ENCODE measurements at regions of chr11 and their contacts with region 1.

Region 1: DNA sequence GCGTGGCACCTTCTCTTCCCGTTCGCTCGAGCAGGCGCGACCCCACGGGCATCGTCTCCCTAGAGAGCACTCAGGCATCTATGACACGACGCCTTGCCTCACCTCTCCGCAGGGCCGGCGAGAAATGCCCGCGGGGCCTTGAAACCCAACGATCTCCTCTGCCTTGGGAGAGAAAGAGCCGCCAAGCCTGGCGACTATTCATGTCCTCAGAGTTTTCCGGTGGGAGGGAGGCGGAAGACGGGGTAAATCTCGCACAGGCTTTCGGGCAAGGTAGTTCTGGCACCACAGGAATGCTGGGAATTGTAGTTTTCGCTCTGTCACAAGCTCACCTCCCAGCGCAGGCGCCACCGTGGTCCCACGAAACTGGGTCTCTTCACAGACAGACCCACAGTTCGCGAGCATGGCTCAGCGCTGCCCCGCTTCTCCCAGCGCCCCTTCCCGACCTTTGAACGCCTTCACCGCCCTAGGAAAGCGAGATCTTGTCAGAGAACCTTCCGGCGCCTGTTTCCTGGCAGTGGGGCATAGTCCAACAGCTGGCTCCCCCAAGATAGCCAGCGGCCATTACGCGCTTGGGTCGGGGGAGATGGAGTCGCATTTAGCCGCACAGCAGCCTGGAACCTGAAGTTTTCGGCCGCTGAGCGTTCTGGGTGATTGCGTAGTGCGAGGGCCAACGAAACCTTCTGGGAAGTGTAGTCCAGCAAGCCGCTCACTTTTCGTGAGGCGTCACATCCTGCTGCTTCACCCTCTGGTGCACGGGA is at the start of gene CCDC90B:
- DNase-seq: peak; percentile 98
- ATAC-seq: peak; percentile 94
- H3K4me3 ChIP-seq: peak within 1 kb of the TSS; percentile 65
- H3K27ac ChIP-seq: peak within 1 kb of the TSS; percentile 92
- H3K4me1 ChIP-seq: peaks cover 2% of the 10 kb centered on the region
- H3K27me3 ChIP-seq: no peaks in the 10 kb centered on the region
- CTCF ChIP-seq: peak; percentile 54
- POLR2A ChIP-seq: peak; percentile 94
- RAD21 ChIP-seq: no peak
- total RNA-seq, gene CCDC90B: 43.7 and 63.0 TPM in 2 replicates

Region 2: GRCh38 chr11:82733444-82734119 is 552.4 kb before region 1 on chr11 and contains the start of gene FAM181B:
- CTCF ChIA-PET with region 1: no interaction called
- POLR2A ChIA-PET with region 1: no interaction called
- dilution Hi-C with region 1: no loop called
- in situ Hi-C with region 1: no loop called
- intact Hi-C with region 1: no loop called
- DNase-seq: no peak
- ATAC-seq: peak; percentile 70
- H3K4me3 ChIP-seq: peak within 1 kb of the TSS; percentile 39
- H3K27ac ChIP-seq: no peak within 1 kb of the TSS
- H3K4me1 ChIP-seq: peaks cover 2% of the 10 kb centered on the region; the same call in 1 of the 2 replicates
- H3K27me3 ChIP-seq: peaks cover 54% of the 10 kb centered on the region
- CTCF ChIP-seq: no peak
- POLR2A ChIP-seq: no peak
- RAD21 ChIP-seq: no peak
- total RNA-seq, gene FAM181B: not detected in 2 replicates

Region 3: DNA sequence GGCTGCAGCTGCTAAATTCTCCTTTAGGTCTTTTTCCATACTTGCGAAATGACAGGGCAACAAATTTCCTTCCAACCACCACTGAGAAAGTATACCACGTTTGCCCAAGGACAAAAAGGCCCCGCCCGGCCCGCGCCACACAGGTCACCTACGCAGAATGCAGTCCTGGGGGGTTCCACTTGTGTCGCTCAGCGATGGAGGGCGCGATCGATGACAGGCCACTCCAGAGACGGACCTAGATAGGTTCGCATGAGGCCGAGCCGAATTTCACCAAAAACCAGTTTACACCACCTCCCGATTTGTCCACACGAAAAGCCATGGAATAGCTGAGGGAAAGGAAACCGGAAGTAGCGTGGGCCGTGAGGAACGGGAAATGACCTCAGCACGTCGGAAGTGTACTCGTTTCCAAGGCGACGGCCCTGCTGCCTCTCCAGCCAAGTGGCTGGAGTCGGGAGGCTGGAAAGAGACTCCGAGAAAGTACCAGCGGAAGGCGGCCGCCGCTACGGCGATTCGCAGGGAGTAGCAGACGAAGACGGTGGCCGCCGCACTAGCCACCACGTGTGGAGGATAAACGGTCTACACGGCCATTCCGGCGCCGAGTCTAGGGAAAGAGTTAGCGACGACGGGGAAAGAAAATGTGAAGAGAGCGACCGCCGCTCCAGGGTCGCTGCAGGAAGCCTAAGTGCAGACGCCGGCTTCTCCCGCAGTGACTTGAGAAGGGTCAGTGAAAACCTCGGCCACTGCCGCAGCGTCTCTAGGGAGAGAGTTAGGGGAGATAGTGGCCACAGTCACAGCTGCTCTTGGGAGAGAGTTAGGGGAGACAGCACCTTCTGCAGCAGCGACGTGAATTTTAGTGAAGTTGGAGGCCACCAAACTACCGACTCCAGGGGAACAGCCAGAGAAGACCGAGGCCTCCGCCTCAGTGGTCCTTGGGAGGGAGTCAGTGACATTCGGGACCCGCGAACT is 92.4 kb before region 1 on chr11 and contains the start of gene ANKRD42:
- CTCF ChIA-PET with region 1: no interaction called
- POLR2A ChIA-PET with region 1: no interaction called
- dilution Hi-C with region 1: no loop called
- in situ Hi-C with region 1: no loop called
- intact Hi-C with region 1: loop called (anchors 5 kb)
- DNase-seq: peak; percentile 96
- ATAC-seq: peak; percentile 81
- H3K4me3 ChIP-seq: peak within 1 kb of the TSS; percentile 85
- H3K27ac ChIP-seq: peak within 1 kb of the TSS; percentile 99
- H3K4me1 ChIP-seq: peaks cover 4% of the 10 kb centered on the region; the same call in 1 of the 2 replicates
- H3K27me3 ChIP-seq: no peaks in the 10 kb centered on the region
- CTCF ChIP-seq: no peak
- POLR2A ChIP-seq: peak; percentile 86
- RAD21 ChIP-seq: peak; percentile 9; the same call in 1 of the 2 replicates
- total RNA-seq, gene ANKRD42: 5.6 and 6.9 TPM in 2 replicates

Region 4: DNA sequence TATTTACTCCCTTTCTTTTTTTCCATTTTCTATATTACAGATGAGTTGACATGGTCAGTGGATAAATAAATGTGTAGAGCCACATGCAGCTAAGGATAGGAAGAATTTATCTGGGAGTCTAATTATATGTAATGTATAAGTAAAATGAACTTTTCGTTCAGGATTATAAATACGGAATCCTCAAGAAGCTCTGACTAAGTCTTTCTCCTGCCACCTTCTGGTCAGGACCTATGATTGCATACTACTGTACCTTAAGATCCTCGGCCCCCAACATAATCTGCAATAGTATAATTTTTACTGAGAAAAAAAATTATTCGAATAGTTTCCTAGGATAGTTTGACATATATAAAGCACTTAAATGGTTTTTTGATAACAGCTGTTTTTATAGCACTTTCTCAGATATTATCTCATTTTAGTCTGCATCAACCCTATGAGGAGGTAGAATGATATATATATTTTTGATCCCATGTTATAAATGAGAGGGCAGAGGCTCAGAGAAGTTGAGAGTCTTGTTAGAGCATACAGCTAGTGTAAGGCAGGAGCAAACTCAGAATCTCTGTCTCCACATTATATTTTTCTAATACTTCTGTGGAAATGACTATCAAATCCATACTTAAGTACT is 35.9 kb before region 1 on chr11:
- CTCF ChIA-PET with region 1: no interaction called
- POLR2A ChIA-PET with region 1: no interaction called
- dilution Hi-C with region 1: no loop called
- in situ Hi-C with region 1: no loop called
- intact Hi-C with region 1: no loop called
- DNase-seq: peak; percentile 69
- ATAC-seq: peak; percentile 92
- H3K4me3 ChIP-seq: no peak overlapping the region
- H3K27ac ChIP-seq: no peak overlapping the region
- H3K4me1 ChIP-seq: 0 out of 2 replicates have a peak, but pooled peaks cover 2% of the 10 kb centered on the region
- H3K27me3 ChIP-seq: no peaks in the 10 kb centered on the region
- CTCF ChIP-seq: peak; percentile 64
- POLR2A ChIP-seq: no peak
- RAD21 ChIP-seq: peak; percentile 60

Region 5: DNA sequence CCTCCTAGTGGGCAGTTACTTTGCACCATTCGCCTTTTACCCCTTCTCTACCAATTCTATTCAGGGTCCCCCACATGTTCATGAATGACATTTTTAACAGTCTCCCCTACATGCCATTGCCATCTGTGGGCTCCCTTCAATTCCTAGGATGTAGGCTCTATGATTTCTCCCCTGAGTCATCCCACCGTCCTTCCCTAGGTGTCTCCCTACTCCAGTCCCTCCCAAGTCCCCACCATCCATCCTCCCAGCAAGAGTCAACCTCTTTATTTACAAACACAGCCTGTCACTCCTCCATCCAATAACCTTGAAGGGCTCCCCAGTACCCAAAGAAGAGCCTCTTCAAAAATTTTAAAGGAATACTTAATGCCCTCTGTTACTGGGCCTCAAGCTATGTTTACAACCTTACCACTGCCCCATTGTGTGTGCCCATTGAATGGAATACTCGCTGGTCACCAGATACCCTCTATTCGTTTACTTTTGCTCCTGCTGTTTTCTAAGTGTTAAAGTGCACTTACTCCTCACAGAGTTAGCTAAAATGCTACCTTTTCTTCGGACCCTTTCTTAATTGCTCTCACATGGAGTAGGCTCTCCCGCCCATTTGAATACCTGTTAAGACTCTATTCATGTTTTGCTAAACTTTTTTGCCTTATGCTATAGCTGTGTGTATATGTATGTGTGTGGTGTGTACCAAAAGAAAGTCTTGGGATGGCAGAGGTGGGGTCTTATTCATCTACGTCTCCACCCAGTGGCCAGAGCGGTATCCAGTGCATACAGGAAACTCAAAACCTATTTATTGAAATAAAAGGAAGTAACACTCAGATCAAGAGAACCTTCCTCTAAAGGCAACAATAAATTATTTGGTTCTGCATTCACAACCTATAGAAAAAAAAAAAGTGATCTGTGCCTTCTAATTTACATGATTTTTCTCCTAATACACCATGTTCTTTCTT is 236.0 kb after region 1 on chr11:
- CTCF ChIA-PET with region 1: no interaction called
- POLR2A ChIA-PET with region 1: no interaction called
- dilution Hi-C with region 1: no loop called
- in situ Hi-C with region 1: no loop called
- intact Hi-C with region 1: loop called (anchors 5 kb)
- DNase-seq: peak; percentile 31
- ATAC-seq: peak; percentile 70
- H3K4me3 ChIP-seq: no peak overlapping the region
- H3K27ac ChIP-seq: no peak overlapping the region
- H3K4me1 ChIP-seq: no peaks in the 10 kb centered on the region
- H3K27me3 ChIP-seq: peaks cover 5% of the 10 kb centered on the region
- CTCF ChIP-seq: peak; percentile 50
- POLR2A ChIP-seq: no peak
- RAD21 ChIP-seq: peak; percentile 65

Region 6: DNA sequence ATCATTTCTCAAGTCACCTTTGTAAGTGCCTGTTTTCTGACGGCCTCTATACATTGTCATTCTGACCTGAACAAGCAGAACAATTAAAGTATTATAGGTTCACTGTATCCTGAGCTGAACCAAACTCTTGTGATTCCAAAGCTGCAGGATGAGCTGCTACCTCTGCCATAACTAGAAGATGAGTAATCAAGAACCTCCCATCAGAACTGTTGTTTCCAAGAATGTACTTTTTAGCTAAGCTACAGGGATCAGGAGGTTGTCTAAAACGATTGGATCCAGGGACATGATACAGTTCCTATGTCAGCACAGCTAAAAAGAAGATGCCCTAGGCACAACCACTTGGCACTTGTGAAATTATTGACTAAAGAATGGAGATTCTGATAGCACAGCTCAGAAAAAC is 288.6 kb after region 1 on chr11:
- CTCF ChIA-PET with region 1: no interaction called
- POLR2A ChIA-PET with region 1: no interaction called
- dilution Hi-C with region 1: no loop called
- in situ Hi-C with region 1: no loop called
- intact Hi-C with region 1: loop called (anchors 10 kb)
- DNase-seq: peak; percentile 58
- ATAC-seq: peak; percentile 85
- H3K4me3 ChIP-seq: no peak overlapping the region
- H3K27ac ChIP-seq: no peak overlapping the region
- H3K4me1 ChIP-seq: no peaks in the 10 kb centered on the region; the same call in 1 of the 2 replicates
- H3K27me3 ChIP-seq: no peaks in the 10 kb centered on the region
- CTCF ChIP-seq: no peak
- POLR2A ChIP-seq: no peak
- RAD21 ChIP-seq: no peak